ENCODE measurements at regions of chr7 and their contacts with region 1.

Region 1: DNA sequence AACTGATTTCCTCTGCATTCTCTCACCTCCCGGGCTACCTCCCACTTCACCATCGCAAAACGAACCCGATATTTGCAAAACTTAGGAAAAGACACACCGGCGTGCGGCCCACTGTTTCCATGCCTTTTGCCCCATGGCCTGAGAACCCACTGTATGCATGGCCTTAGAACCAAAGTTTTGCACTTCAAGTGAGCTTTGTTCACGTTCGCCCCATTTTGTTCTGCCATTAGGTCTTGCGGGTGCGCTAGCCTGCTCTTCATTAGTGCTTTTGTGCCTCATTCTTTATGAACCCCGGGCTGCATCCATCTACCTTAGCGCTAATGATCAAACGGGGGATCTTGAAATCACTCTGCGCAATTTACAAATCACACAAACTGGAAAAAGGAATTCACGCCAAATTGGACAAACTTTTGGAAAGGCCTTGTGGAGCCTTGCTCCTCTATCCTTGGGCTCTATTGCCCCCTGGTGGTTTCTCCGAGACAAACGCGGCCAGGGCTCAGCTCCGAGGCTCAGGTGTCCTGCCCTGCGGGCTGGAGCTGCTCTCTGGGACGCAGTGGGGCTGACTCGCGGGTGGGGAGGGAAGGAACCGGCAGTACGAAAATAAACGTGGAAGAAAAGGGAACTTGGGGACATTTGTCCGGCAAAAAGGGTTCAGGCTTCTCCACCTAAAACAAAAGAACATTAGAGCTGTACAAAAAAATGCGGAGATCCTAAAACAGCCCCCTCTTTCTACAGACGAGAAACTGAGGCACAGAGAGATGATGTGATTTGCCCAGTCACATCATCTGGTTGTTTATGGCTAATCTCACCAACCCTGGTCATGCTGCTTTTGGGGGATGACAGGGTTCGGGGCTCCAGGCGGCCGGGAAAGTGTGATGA is 300.4 kb upstream of the NFE2L3 start:
- DNase-seq: peak; percentile 64
- H3K4me3 ChIP-seq: peak overlapping the region in 2 of 3 experiments; percentile 3 to 33
- H3K27ac ChIP-seq: no peak overlapping the region
- H3K4me1 ChIP-seq: peaks cover 14% of the 10 kb centered on the region
- H3K27me3 ChIP-seq: peaks cover 5% of the 10 kb centered on the region
- CTCF ChIP-seq: peak; percentile 83 to 92

Region 2: DNA sequence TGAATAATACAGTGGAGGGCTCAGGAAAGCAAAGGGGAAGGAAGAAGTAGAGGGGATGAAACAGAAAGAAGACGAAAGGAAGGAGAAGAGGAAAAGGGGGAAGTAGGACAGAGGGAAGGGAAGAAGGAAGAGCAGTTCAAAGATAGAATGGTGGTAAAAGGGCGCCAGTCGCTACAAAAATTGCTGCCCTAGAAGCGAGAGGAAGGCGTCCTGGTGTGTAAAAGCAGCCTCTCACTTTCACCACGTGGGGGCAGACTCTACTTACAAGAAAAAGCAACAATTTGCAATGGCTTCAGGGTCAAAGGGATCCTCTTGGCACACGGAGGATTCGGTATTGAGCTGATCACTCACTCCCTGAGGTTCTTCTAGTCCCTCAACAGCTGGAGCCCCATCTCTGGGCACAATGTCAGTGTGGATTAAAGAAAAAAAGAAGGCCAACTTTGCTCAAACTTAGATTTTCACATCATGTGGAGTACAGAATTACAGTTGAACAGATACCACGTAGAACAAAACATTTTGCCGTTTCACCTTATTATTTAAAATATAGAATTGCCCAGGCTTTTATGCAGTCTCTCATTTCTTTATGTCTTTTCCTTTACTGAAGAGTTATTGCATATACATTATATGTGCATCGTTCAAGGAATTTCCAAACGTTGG is 591.9 kb before region 1 on chr7:
- CTCF ChIA-PET with region 1: no interaction called
- dilution Hi-C with region 1: no loop called
- in situ Hi-C with region 1: loop called (anchors 5 kb)
- intact Hi-C with region 1: loop called (anchors 1 kb)
- DNase-seq: peak; percentile 52
- H3K4me3 ChIP-seq: no peak overlapping the region
- H3K27ac ChIP-seq: no peak overlapping the region
- H3K4me1 ChIP-seq: peaks cover 13% of the 10 kb centered on the region
- H3K27me3 ChIP-seq: peaks cover 5% of the 10 kb centered on the region
- CTCF ChIP-seq: peak; percentile 87 to 92

Region 3: GRCh38 chr7:25408012-25408687 is 443.4 kb before region 1 on chr7:
- CTCF ChIA-PET with region 1: no interaction called
- dilution Hi-C with region 1: no loop called
- in situ Hi-C with region 1: loop called in 1 of 2 experiments (anchors 10 kb)
- intact Hi-C with region 1: no loop called
- DNase-seq: no peak
- H3K4me3 ChIP-seq: no peak overlapping the region
- H3K27ac ChIP-seq: no peak overlapping the region
- H3K4me1 ChIP-seq: no peaks in the 10 kb centered on the region
- H3K27me3 ChIP-seq: no peaks in the 10 kb centered on the region
- CTCF ChIP-seq: no peak

Region 4: GRCh38 chr7:25597946-25598345 is 253.6 kb before region 1 on chr7:
- CTCF ChIA-PET with region 1: no interaction called
- dilution Hi-C with region 1: no loop called
- in situ Hi-C with region 1: loop called (anchors 25 kb)
- intact Hi-C with region 1: no loop called
- DNase-seq: no peak
- H3K4me3 ChIP-seq: no peak overlapping the region
- H3K27ac ChIP-seq: no peak overlapping the region
- H3K4me1 ChIP-seq: no peaks in the 10 kb centered on the region
- H3K27me3 ChIP-seq: peaks cover 2% of the 10 kb centered on the region
- CTCF ChIP-seq: no peak

Region 5: DNA sequence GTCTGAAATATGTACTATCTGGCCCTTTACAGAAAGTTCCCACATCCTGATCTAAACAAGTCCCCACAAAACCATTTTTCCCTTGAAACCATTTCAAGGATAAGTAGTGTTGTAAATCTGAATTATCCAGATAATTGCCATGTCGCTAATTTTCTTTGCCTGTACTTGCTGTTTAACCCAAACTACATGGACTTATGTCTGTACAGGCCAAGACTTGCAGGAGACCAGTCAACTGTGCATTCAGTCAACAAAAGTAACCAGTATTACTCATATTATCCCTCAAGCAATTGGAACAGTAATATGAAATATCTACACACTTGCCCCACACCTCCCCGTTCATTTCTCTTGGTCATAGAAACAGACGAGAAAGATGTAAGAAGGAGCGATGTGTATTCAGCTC is 47.4 kb before region 1 on chr7:
- CTCF ChIA-PET with region 1: no interaction called
- dilution Hi-C with region 1: no loop called
- in situ Hi-C with region 1: no loop called
- intact Hi-C with region 1: loop called (anchors 5 kb)
- DNase-seq: peak; percentile 94
- H3K4me3 ChIP-seq: no peak overlapping the region
- H3K27ac ChIP-seq: no peak overlapping the region
- H3K4me1 ChIP-seq: peaks cover 27% of the 10 kb centered on the region
- H3K27me3 ChIP-seq: no peaks in the 10 kb centered on the region
- CTCF ChIP-seq: no peak

Region 6: DNA sequence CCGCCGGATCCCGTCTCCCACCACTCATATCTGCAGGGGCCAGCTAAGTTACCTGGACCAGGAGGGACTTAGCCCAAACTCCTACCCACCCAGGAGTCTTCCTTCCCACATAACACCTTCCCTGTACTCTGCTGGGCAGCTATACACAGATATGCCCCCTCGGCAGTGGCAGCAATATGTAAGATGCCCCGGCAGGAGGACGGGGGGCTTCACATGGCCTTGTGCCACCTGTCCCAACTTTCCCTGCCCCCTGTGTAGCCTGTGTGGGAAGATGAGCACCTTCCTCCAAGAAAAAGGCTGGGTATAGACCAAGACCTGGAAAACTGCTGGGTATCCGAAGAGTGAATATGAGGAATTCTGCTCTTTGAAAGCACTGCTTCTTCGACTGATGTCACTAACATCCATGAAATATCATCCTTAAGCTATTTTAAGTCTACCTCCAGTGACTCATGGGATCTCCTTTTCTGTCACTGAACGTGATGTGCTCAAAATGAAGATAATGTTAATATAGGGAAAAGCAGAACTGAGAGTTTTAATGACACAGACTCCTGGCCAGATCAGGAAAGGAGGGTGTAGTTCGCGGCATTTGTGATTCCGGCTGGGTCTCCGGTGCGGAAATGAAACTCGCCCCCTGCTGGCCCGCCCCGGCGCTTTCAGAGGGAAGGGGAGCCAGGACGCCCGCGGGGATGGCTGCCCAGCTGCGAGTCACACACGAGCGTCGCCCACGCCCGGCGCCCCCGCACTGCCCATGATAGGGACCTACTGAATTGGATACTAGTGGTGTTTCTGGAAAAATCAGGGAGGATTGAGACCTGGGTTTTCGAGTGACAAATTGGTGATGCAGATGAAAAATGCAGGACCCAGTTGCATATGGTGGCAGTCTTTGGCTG is 43.6 kb after region 1 on chr7:
- CTCF ChIA-PET with region 1: no interaction called
- dilution Hi-C with region 1: no loop called
- in situ Hi-C with region 1: no loop called
- intact Hi-C with region 1: no loop called
- DNase-seq: peak; percentile 17
- H3K4me3 ChIP-seq: no peak overlapping the region
- H3K27ac ChIP-seq: no peak overlapping the region
- H3K4me1 ChIP-seq: peaks cover 27% of the 10 kb centered on the region
- H3K27me3 ChIP-seq: no peaks in the 10 kb centered on the region
- CTCF ChIP-seq: peak; percentile 46 to 65

Region 7: GRCh38 chr7:25926891-25927625 is 75.5 kb after region 1 on chr7:
- CTCF ChIA-PET with region 1: no interaction called
- dilution Hi-C with region 1: no loop called
- in situ Hi-C with region 1: no loop called
- intact Hi-C with region 1: no loop called
- DNase-seq: no peak
- H3K4me3 ChIP-seq: no peak overlapping the region
- H3K27ac ChIP-seq: no peak overlapping the region
- H3K4me1 ChIP-seq: peaks cover 17% of the 10 kb centered on the region
- H3K27me3 ChIP-seq: no peaks in the 10 kb centered on the region
- CTCF ChIP-seq: no peak

Measured in mammary epithelial cell (primary cell).